OCI-LY7 (cell line): ENCODE measurements at regions of chr3 and their contacts with region 1.

Region 1: GRCh38 chr3:123028233-123028828 is 768 bp upstream of the SEMA5B start:
- DNase-seq: peak; percentile 39
- H3K4me3 ChIP-seq: no peak overlapping the region
- H3K27ac ChIP-seq: no peak overlapping the region
- H3K4me1 ChIP-seq: no peaks in the 10 kb centered on the region
- CTCF ChIP-seq: peak; percentile 73

Region 2: GRCh38 chr3:121924734-121925133 is 1103.6 kb before region 1 on chr3:
- CTCF ChIA-PET with region 1: no interaction called
- POLR2A ChIA-PET with region 1: no interaction called
- intact Hi-C with region 1: no loop called
- DNase-seq: no peak
- H3K4me3 ChIP-seq: no peak overlapping the region
- H3K27ac ChIP-seq: no peak overlapping the region
- H3K4me1 ChIP-seq: no peaks in the 10 kb centered on the region
- CTCF ChIP-seq: no peak

Region 3: DNA sequence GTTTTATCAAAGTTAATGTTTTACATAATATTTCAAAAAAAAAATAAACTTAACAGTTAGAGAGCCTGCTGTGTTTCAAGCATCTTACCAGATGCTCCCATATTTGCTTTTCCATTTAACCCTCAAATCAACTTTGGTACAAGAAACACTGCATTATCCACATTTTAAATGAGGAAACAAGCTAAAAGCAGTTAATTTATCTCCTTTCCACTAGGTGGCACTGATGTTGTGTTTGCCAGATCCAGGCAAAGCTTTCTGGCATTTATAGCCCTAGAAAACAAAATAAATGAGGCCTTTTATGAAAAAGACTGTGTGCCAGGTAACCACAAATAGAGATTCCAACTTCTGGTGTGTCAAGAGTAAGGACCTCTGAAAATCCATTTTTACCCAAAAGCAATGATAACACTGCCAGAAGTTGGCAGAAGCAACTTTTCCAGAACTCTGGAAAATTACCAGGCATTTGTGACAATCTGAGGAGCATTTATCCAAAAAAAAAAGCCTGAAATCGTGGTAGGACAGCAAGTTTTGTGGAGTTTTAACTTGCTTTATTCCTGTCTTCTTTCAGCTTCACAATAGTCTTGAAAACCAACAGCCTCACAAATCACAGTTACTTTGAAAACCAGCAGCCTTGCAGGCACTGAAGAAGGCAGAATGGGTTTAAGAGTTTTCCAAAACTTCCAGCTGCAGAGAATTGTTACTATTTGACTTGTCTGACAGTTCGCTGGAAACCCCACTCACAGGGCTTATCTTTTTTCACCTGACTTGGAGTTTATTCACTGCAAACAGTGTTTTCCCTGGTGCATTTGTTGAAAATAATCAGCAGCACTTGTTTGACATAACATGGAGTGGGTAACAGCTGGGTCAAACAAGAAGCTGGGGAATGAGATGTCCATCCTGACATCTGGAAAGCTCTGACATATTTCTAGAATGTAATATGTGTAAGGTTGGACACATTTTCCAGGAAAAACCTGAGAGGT is 635.2 kb before region 1 on chr3:
- CTCF ChIA-PET with region 1: no interaction called
- POLR2A ChIA-PET with region 1: no interaction called
- intact Hi-C with region 1: loop called (anchors 2 kb)
- DNase-seq: peak; percentile 70
- H3K4me3 ChIP-seq: no peak overlapping the region
- H3K27ac ChIP-seq: no peak overlapping the region
- H3K4me1 ChIP-seq: peaks cover 5% of the 10 kb centered on the region
- CTCF ChIP-seq: peak; percentile 95

Region 4: GRCh38 chr3:122681284-122681973 is 346.9 kb before region 1 on chr3:
- CTCF ChIA-PET with region 1: no interaction called
- POLR2A ChIA-PET with region 1: no interaction called
- intact Hi-C with region 1: no loop called
- DNase-seq: no peak
- H3K4me3 ChIP-seq: peak overlapping the region; percentile 76
- H3K27ac ChIP-seq: no peak overlapping the region
- H3K4me1 ChIP-seq: peaks cover 33% of the 10 kb centered on the region
- CTCF ChIP-seq: no peak

Region 5: DNA sequence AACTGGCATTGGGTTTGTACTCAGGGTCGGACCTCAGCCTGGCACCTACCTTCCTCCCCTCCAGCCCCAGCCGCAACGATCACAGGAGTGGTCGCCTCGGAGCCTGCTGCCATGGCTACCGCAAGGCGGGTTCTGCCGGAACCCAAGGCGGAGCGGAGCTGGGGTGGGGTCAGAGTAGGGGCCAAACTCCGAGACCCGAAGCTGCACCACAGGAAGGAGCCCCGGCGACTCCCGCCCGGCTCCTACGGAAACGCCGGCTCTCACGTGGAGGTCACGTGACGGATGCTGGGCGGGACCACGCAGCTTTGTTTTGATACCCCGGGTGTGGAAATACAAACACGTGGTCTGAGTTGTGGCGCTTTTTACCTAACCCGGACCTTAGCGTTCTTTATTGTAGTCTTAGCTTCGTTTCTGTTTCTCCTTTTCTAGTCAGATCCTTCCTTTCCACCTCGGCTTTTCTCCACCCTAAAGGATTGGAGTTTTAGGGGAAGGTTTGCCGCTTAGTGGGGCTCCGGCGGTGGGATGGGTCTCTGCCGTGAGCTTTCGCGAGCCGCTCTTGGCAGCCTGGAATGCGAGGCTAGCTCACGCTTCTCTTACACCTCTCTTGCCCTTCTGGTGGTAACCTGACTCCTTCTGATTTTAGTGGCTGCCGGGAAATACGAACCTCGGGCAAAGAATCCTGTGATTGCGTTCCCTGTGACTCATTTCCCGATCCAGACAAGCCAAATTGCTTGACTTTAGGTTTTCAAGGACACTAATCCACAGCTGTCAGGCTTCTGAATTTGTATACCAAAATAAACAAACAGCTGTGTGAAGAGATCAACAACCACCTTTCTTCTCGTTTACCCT is 234.5 kb before region 1 on chr3 and contains the start of gene HSPBAP1:
- CTCF ChIA-PET with region 1: no interaction called
- POLR2A ChIA-PET with region 1: no interaction called
- intact Hi-C with region 1: no loop called
- DNase-seq: peak; percentile 95
- H3K4me3 ChIP-seq: peak within 1 kb of the TSS; percentile 85
- H3K27ac ChIP-seq: peak within 1 kb of the TSS; percentile 66
- H3K4me1 ChIP-seq: peaks cover 30% of the 10 kb centered on the region
- CTCF ChIP-seq: no peak
- total RNA-seq, gene HSPBAP1: 8.8 and 11.9 TPM in 2 replicates

Region 6: GRCh38 chr3:122864498-122864897 is 163.8 kb before region 1 on chr3:
- CTCF ChIA-PET with region 1: no interaction called
- POLR2A ChIA-PET with region 1: no interaction called
- intact Hi-C with region 1: loop called (anchors 10 kb)
- DNase-seq: no peak
- H3K4me3 ChIP-seq: no peak overlapping the region
- H3K27ac ChIP-seq: no peak overlapping the region
- H3K4me1 ChIP-seq: no peaks in the 10 kb centered on the region
- CTCF ChIP-seq: no peak

Region 7: DNA sequence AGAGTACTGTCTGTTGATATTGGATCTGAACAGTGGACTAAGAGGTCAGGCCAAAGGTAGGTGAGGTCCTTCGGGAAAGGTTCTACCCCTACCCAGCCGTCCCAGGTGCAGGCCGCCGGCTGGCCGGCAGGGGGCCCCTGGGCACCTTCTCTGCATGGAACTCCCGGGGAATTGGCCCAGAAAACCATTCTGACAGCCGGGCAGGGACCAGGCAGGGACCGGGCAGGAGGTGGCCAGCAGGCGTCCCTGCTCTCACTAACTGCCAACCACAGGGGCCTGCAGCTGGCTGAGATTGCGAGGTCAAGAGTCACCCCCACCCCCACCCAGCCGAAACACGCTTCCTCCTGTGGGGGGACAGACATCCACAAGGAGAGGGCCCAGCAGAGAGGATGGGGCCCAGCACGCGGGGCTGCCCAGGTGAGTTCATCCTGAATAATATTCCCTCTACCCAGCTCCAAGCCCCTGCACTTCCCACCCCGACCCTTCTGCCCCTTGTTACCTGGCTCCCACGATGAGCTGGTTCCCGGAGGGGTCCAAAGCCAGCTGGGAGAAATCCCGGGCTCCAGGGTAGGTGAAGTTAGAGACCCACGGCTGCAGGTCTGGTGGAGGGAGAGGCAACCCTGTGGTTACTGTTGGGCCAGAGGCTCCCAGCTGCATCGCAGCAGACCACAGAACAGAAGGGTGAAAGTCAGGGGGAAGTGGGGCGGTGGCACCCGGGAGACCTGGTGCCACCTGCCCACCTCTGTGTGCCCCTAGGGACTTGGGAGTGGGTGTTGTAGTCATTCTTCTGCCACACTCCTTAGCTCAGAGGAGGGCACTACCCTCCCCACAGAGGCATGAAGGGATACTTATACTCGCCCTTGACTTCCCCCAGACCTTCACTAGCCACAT is 85.1 kb before region 1 on chr3:
- CTCF ChIA-PET with region 1: no interaction called
- POLR2A ChIA-PET with region 1: no interaction called
- intact Hi-C with region 1: loop called (anchors 1 kb)
- DNase-seq: peak; percentile 36
- H3K4me3 ChIP-seq: no peak overlapping the region
- H3K27ac ChIP-seq: no peak overlapping the region
- H3K4me1 ChIP-seq: no peaks in the 10 kb centered on the region
- CTCF ChIP-seq: peak; percentile 91

Region 8: DNA sequence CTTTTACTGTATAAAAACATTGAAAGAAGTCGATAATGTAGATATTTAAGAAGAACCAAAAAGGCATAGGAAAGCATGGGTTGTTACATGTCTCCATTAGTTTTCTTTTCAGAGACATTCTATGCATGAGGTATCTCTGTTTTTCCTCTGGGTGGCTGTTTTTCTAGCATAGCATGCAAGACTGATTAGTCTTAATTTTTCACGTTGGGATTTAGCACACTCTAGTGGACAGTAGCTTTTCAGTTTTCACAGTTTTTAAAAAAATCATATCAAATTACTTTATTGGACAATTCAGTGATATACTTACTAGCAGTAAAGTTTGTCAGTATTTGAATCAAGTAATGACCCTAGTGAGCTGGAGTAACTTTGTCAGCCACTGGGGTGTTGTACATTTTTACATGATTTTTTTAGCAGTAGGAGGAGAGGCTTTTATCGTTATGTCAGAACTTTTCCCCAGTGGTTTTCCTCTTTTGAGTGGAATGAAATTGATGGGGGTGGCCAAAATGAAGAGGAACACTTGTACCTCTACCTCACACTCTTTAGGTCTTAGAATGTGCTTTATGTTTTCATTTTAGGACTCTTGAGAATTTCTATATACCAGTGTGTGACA is 230.6 kb after region 1 on chr3:
- CTCF ChIA-PET with region 1: no interaction called
- POLR2A ChIA-PET with region 1: no interaction called
- intact Hi-C with region 1: loop called (anchors 5 kb)
- DNase-seq: peak; percentile 68
- H3K4me3 ChIP-seq: no peak overlapping the region
- H3K27ac ChIP-seq: no peak overlapping the region
- H3K4me1 ChIP-seq: peaks cover 7% of the 10 kb centered on the region
- CTCF ChIP-seq: peak; percentile 88